A673 (cell line): ENCODE measurements at regions of chr1 and their contacts with region 1.

Region 1: GRCh38 chr1:192311281-192311680 is 5.5 kb upstream of the RGS21 start:
- DNase-seq: peak; percentile 86
- H3K4me3 ChIP-seq: no peak overlapping the region
- H3K27ac ChIP-seq: peak overlapping the region; percentile 62
- H3K4me1 ChIP-seq: peaks cover 44% of the 10 kb centered on the region
- H3K27me3 ChIP-seq: no peaks in the 10 kb centered on the region
- CTCF ChIP-seq: peak; percentile 81

Region 2: GRCh38 chr1:190633488-190633887 is 1677.8 kb before region 1 on chr1:
- CTCF ChIA-PET with region 1: no interaction called
- POLR2A ChIA-PET with region 1: no interaction called
- intact Hi-C with region 1: loop called (anchors 10 kb)
- DNase-seq: peak; percentile 63
- H3K4me3 ChIP-seq: no peak overlapping the region
- H3K27ac ChIP-seq: no peak overlapping the region
- H3K4me1 ChIP-seq: no peaks in the 10 kb centered on the region
- H3K27me3 ChIP-seq: no peaks in the 10 kb centered on the region
- CTCF ChIP-seq: peak; percentile 51

Region 3: DNA sequence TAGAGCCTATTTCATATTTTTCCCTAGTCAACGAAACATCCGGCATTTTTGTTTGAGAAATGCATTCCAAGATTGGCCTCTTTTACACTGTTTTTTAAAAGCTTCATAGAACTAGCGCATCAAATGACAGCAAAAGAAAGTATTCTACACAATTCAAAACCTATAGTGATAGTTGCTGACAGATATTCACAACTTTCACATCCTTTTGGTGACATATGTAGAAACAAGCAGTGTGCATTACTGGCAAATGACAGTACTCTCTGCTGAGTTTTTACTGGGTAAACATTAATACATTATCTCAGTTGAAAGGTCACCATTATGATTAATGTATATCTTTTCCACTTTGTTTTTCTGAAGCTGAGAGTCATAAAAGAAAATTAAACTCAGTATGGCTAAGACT is 288.5 kb before region 1 on chr1:
- CTCF ChIA-PET with region 1: no interaction called
- POLR2A ChIA-PET with region 1: no interaction called
- intact Hi-C with region 1: no loop called
- DNase-seq: no peak
- H3K4me3 ChIP-seq: no peak overlapping the region
- H3K27ac ChIP-seq: no peak overlapping the region
- H3K4me1 ChIP-seq: no peaks in the 10 kb centered on the region
- H3K27me3 ChIP-seq: no peaks in the 10 kb centered on the region
- CTCF ChIP-seq: no peak

Region 4: GRCh38 chr1:192462616-192463015 is 151.3 kb after region 1 on chr1:
- CTCF ChIA-PET with region 1: no interaction called
- POLR2A ChIA-PET with region 1: no interaction called
- intact Hi-C with region 1: no loop called
- DNase-seq: peak; percentile 46
- H3K4me3 ChIP-seq: no peak overlapping the region
- H3K27ac ChIP-seq: no peak overlapping the region
- H3K4me1 ChIP-seq: no peaks in the 10 kb centered on the region
- H3K27me3 ChIP-seq: no peaks in the 10 kb centered on the region
- CTCF ChIP-seq: peak; percentile 41